Activated CD4-positive, alpha-beta memory T cell treated with anti-CD3 and anti-CD28 coated beads for 36 hours (primary cell): ENCODE measurements at regions of chr3 and their contacts with region 1.

Region 1: DNA sequence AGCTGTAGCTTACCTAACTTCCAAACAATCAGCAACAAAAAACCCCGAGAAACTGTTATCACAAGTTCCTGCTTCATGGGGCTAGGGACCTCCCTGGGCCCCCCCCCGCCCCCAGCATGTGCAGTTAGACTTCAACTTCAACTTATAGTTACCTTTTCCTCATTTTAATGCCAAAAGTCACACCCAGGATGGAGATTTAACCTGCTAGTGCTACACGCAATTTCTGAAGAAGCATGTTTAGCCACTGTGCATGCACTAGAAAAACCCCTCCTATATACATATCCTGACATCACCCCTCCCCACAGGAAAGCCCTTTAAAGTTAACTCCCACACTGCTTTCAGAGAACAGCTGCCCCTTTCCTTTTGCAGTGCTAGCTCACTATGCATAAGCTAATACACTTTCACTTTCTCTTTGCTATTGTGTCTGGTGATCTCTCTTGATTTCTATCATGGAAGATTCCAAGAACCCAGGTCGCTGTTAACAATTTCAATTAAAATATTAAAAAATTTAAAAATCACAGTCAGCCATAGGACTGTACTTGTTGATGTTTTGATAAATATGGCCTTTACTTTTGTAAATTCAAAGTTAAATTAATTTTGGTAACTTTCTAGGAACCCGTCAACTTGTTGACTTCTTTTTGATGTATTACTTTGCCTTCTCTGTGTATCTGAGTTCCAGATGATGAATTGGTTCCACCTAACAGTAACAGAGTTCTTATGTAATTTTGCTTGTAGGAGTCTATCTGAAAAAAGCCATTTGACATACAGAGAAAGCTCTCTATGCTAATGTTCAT is 75.2 kb upstream of the ACAD9 start:
- DNase-seq: peak; percentile 76
- H3K4me3 Mint-ChIP-seq: peak overlapping the region; percentile 49
- H3K27ac Mint-ChIP-seq: peak overlapping the region; percentile 94
- H3K4me1 Mint-ChIP-seq: peaks cover 78% of the 10 kb centered on the region
- H3K27me3 Mint-ChIP-seq: no peaks in the 10 kb centered on the region

Region 2: DNA sequence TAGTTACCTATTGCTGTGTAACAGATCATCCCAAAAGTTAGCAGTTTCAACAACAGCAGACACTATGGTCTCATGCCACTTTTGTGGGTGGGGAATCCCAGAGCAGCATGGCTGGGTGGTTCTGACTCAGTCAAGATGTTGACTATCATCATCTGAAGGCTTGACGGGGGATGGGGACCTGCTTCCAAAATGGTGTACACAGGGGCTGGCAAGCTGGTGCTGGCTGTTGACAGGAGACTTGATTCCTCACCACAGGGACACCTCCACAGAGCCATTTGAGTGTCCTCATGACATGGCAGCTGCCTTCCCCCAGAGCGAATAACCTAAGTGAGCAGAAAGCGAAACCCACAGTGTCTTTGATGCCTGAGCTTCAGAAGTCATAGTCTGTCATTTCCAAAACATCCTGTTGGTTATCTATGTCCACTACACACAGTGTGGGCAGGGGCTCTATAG is 356.6 kb before region 1 on chr3:
- CTCF ChIA-PET with region 1: no interaction called
- POLR2A ChIA-PET with region 1: no interaction called
- intact Hi-C with region 1: loop called (anchors 5 kb)
- DNase-seq: peak; percentile 89
- H3K4me3 Mint-ChIP-seq: peak overlapping the region; percentile 24
- H3K27ac Mint-ChIP-seq: peak overlapping the region; percentile 89
- H3K4me1 Mint-ChIP-seq: peaks cover 39% of the 10 kb centered on the region
- H3K27me3 Mint-ChIP-seq: no peaks in the 10 kb centered on the region

Region 3: DNA sequence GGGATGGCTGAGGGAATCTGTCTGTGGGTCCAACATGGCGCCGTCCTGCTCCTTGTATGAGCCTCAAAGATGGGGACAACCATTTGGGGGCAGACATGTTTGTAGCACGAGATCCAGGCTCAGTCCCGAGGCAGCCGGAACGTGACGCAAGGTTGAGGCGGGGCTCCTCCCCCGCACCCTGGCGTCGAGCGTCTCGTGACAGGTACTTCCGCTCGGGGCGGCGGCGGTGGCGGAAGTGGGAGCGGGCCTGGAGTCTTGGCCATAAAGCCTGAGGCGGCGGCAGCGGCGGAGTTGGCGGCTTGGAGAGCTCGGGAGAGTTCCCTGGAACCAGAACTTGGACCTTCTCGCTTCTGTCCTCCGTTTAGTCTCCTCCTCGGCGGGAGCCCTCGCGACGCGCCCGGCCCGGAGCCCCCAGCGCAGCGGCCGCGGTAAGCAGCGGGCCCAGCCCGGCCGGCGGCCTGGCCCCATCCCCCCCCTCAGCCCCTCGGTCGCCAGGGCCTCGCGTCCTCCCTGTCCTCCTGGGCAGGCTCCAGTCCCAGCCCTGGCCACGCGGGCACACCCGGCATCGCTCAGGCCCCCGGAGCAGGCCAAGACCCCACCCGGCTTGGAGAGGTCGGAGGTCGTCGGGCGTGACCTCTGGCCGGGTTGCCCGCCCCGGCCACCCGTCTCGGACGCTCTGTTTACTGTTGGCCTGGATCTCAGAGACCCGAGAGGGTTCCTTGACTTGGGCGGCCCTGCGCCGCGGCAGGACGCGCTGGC is 78.1 kb before region 1 on chr3 and contains the start of gene RAB7A:
- CTCF ChIA-PET with region 1: interaction called, 6 read pairs
- POLR2A ChIA-PET with region 1: interaction called, 7 read pairs
- intact Hi-C with region 1: loop called (anchors 1 kb)
- DNase-seq: peak; percentile 99
- H3K4me3 Mint-ChIP-seq: peak within 1 kb of the TSS; percentile 93
- H3K27ac Mint-ChIP-seq: peak within 1 kb of the TSS; percentile 87
- H3K4me1 Mint-ChIP-seq: peaks cover 50% of the 10 kb centered on the region
- H3K27me3 Mint-ChIP-seq: no peaks in the 10 kb centered on the region
- total RNA-seq, gene RAB7A: 264 to 272 TPM

Region 4: GRCh38 chr3:128787256-128788240 is 16.7 kb before region 1 on chr3:
- CTCF ChIA-PET with region 1: interaction called, 90 read pairs
- POLR2A ChIA-PET with region 1: interaction called, 55 read pairs
- intact Hi-C with region 1: loop called (anchors 1 kb)
- DNase-seq: peak; percentile 60
- H3K4me3 Mint-ChIP-seq: peak overlapping the region; percentile 67
- H3K27ac Mint-ChIP-seq: peak overlapping the region; percentile 98
- H3K4me1 Mint-ChIP-seq: peaks cover 93% of the 10 kb centered on the region
- H3K27me3 Mint-ChIP-seq: no peaks in the 10 kb centered on the region

Region 5: GRCh38 chr3:128845778-128846485 is 41.7 kb after region 1 on chr3:
- CTCF ChIA-PET with region 1: interaction called, 7 read pairs
- POLR2A ChIA-PET with region 1: no interaction called
- intact Hi-C with region 1: loop called (anchors 5 kb)
- DNase-seq: peak; percentile 92
- H3K4me3 Mint-ChIP-seq: peak overlapping the region; percentile 45
- H3K27ac Mint-ChIP-seq: peak overlapping the region; percentile 84
- H3K4me1 Mint-ChIP-seq: peaks cover 18% of the 10 kb centered on the region
- H3K27me3 Mint-ChIP-seq: no peaks in the 10 kb centered on the region

Region 6: GRCh38 chr3:128879125-128879969 is 75.1 kb after region 1 on chr3 and contains the start of gene ACAD9:
- CTCF ChIA-PET with region 1: interaction called, 3 read pairs
- POLR2A ChIA-PET with region 1: interaction called, 8 read pairs
- intact Hi-C with region 1: loop called (anchors 1 kb)
- DNase-seq: peak; percentile 98
- H3K4me3 Mint-ChIP-seq: peak within 1 kb of the TSS; percentile 93
- H3K27ac Mint-ChIP-seq: peak within 1 kb of the TSS; percentile 95
- H3K4me1 Mint-ChIP-seq: peaks cover 61% of the 10 kb centered on the region
- H3K27me3 Mint-ChIP-seq: no peaks in the 10 kb centered on the region
- total RNA-seq, gene ACAD9: 45.3 to 45.5 TPM

Region 7: GRCh38 chr3:129160891-129161859 is 357.0 kb after region 1 on chr3 and contains the start of gene ISY1:
- CTCF ChIA-PET with region 1: no interaction called
- POLR2A ChIA-PET with region 1: no interaction called
- intact Hi-C with region 1: loop called (anchors 1 kb)
- DNase-seq: peak; percentile 93
- H3K4me3 Mint-ChIP-seq: peak within 1 kb of the TSS; percentile 98
- H3K27ac Mint-ChIP-seq: peak within 1 kb of the TSS; percentile 100
- H3K4me1 Mint-ChIP-seq: peaks cover 31% of the 10 kb centered on the region
- H3K27me3 Mint-ChIP-seq: no peaks in the 10 kb centered on the region
- total RNA-seq, gene ISY1: 60.7 to 61.7 TPM